Naive thymus-derived CD4-positive, alpha-beta T cell (primary cell): ENCODE measurements at regions of chr6 and their contacts with region 1.

Region 1: GRCh38 chr6:166382933-166383801 is at the start of gene MPC1:
- DNase-seq: peak; percentile 91 to 96 (median 94)
- ATAC-seq: peak; percentile 98
- H3K4me3 ChIP-seq: peak within 1 kb of the TSS; percentile 85
- H3K4me3 Mint-ChIP-seq: peak within 1 kb of the TSS; percentile 89 to 98 (median 94)
- H3K27ac ChIP-seq: peak within 1 kb of the TSS; percentile 87
- H3K27ac Mint-ChIP-seq: peak within 1 kb of the TSS; percentile 78 to 95 (median 91)
- H3K4me1 ChIP-seq: no peaks in the 10 kb centered on the region
- H3K4me1 Mint-ChIP-seq: peaks cover 4 to 20% (median 16%) of the 10 kb centered on the region in 7 donors
- H3K27me3 ChIP-seq: no peaks in the 10 kb centered on the region
- H3K27me3 Mint-ChIP-seq: peaks cover 0 to 8% (median 0%) of the 10 kb centered on the region in 5 donors
- total RNA-seq, gene MPC1: 18.5 to 31.1 (median 26.5) TPM

Region 2: GRCh38 chr6:166258854-166259276 is 124.3 kb before region 1 on chr6:
- CTCF ChIA-PET with region 1: interaction called, 3 read pairs
- POLR2A ChIA-PET with region 1: no interaction called
- intact Hi-C with region 1: loop called in 1 of 2 experiments (anchors 5 kb)
- DNase-seq: peak in 2 of 9 donors; percentile 20 to 21
- ATAC-seq: peak; percentile 84
- H3K4me3 ChIP-seq: no peak overlapping the region
- H3K4me3 Mint-ChIP-seq: peak overlapping the region in 9 of 10 donors; percentile 36 to 78 (median 75)
- H3K27ac ChIP-seq: no peak overlapping the region
- H3K27ac Mint-ChIP-seq: peak overlapping the region in 8 of 9 donors; percentile 75 to 99 (median 92)
- H3K4me1 ChIP-seq: peaks cover 8 to 22% of the 10 kb centered on the region in 2 donors
- H3K4me1 Mint-ChIP-seq: peaks cover 0 to 66% (median 42%) of the 10 kb centered on the region in 7 donors
- H3K27me3 ChIP-seq: no peaks in the 10 kb centered on the region
- H3K27me3 Mint-ChIP-seq: peaks cover 0 to 54% (median 34%) of the 10 kb centered on the region in 5 donors

Region 3: GRCh38 chr6:166313255-166314070 is 69.7 kb before region 1 on chr6:
- CTCF ChIA-PET with region 1: interaction called, 18 read pairs
- POLR2A ChIA-PET with region 1: no interaction called
- intact Hi-C with region 1: loop called (anchors 1 kb)
- DNase-seq: peak in 5 of 9 donors; percentile 28 to 55 (median 36)
- ATAC-seq: peak; percentile 98
- H3K4me3 ChIP-seq: no peak overlapping the region
- H3K4me3 Mint-ChIP-seq: no peak overlapping the region
- H3K27ac ChIP-seq: no peak overlapping the region
- H3K27ac Mint-ChIP-seq: no peak overlapping the region
- H3K4me1 ChIP-seq: no peaks in the 10 kb centered on the region
- H3K4me1 Mint-ChIP-seq: peaks cover 0 to 4% (median 0%) of the 10 kb centered on the region in 7 donors
- H3K27me3 ChIP-seq: peaks cover 0 to under 1% of the 10 kb centered on the region in 2 donors
- H3K27me3 Mint-ChIP-seq: peaks cover 13 to 42% (median 18%) of the 10 kb centered on the region in 5 donors

Region 4: GRCh38 chr6:166342349-166343149 is 40.6 kb before region 1 on chr6 and contains the start of gene SFT2D1:
- CTCF ChIA-PET with region 1: interaction called, 3 read pairs
- POLR2A ChIA-PET with region 1: interaction called, 9 read pairs
- intact Hi-C with region 1: loop called (anchors 1 kb)
- DNase-seq: peak; percentile 33 to 87 (median 47)
- ATAC-seq: peak; percentile 88
- H3K4me3 ChIP-seq: peak within 1 kb of the TSS; percentile 94
- H3K4me3 Mint-ChIP-seq: peak within 1 kb of the TSS in 8 of 10 donors; percentile 83 to 94 (median 90)
- H3K27ac ChIP-seq: peak within 1 kb of the TSS; percentile 79
- H3K27ac Mint-ChIP-seq: peak within 1 kb of the TSS; percentile 72 to 95 (median 84)
- H3K4me1 ChIP-seq: peaks cover 32 to 37% of the 10 kb centered on the region in 2 donors
- H3K4me1 Mint-ChIP-seq: peaks cover 4 to 18% (median 8%) of the 10 kb centered on the region in 7 donors
- H3K27me3 ChIP-seq: no peaks in the 10 kb centered on the region
- H3K27me3 Mint-ChIP-seq: peaks cover 0 to 10% (median 0%) of the 10 kb centered on the region in 5 donors
- total RNA-seq, gene SFT2D1: 18.3 to 50.1 (median 33.7) TPM

Region 5: GRCh38 chr6:166419286-166419685 is 36.1 kb after region 1 on chr6:
- CTCF ChIA-PET with region 1: no interaction called
- POLR2A ChIA-PET with region 1: interaction called, 5 read pairs
- intact Hi-C with region 1: loop called (anchors 1 kb)
- DNase-seq: peak in 2 of 9 donors; percentile 34 to 52
- ATAC-seq: peak; percentile 42
- H3K4me3 ChIP-seq: no peak overlapping the region
- H3K4me3 Mint-ChIP-seq: peak overlapping the region; percentile 4 to 79 (median 57)
- H3K27ac ChIP-seq: peak overlapping the region; percentile 50
- H3K27ac Mint-ChIP-seq: peak overlapping the region; percentile 83 to 99 (median 97)
- H3K4me1 ChIP-seq: peaks cover 63 to 66% of the 10 kb centered on the region in 2 donors
- H3K4me1 Mint-ChIP-seq: peaks cover 52 to 73% (median 64%) of the 10 kb centered on the region in 7 donors
- H3K27me3 ChIP-seq: no peaks in the 10 kb centered on the region
- H3K27me3 Mint-ChIP-seq: peaks cover 0 to 1% (median 0%) of the 10 kb centered on the region in 5 donors

Region 6: GRCh38 chr6:166627033-166627874 is 244.1 kb after region 1 on chr6 and contains the start of gene RPS6KA2:
- CTCF ChIA-PET with region 1: no interaction called
- POLR2A ChIA-PET with region 1: no interaction called
- intact Hi-C with region 1: loop called (anchors 1 kb)
- DNase-seq: peak; percentile 99 to 100 (median 100)
- ATAC-seq: peak; percentile 95
- H3K4me3 ChIP-seq: peak within 1 kb of the TSS; percentile 91
- H3K4me3 Mint-ChIP-seq: peak within 1 kb of the TSS; percentile 83 to 98 (median 91)
- H3K27ac ChIP-seq: peak within 1 kb of the TSS; percentile 66
- H3K27ac Mint-ChIP-seq: peak within 1 kb of the TSS; percentile 60 to 96 (median 90)
- H3K4me1 ChIP-seq: peaks cover 6 to 16% of the 10 kb centered on the region in 2 donors
- H3K4me1 Mint-ChIP-seq: peaks cover 8 to 30% (median 14%) of the 10 kb centered on the region in 7 donors
- H3K27me3 ChIP-seq: no peaks in the 10 kb centered on the region
- H3K27me3 Mint-ChIP-seq: peaks cover 0 to 60% (median 18%) of the 10 kb centered on the region in 5 donors
- total RNA-seq, gene RPS6KA2: 4.5 to 17.1 (median 6.6) TPM

Region 7: DNA sequence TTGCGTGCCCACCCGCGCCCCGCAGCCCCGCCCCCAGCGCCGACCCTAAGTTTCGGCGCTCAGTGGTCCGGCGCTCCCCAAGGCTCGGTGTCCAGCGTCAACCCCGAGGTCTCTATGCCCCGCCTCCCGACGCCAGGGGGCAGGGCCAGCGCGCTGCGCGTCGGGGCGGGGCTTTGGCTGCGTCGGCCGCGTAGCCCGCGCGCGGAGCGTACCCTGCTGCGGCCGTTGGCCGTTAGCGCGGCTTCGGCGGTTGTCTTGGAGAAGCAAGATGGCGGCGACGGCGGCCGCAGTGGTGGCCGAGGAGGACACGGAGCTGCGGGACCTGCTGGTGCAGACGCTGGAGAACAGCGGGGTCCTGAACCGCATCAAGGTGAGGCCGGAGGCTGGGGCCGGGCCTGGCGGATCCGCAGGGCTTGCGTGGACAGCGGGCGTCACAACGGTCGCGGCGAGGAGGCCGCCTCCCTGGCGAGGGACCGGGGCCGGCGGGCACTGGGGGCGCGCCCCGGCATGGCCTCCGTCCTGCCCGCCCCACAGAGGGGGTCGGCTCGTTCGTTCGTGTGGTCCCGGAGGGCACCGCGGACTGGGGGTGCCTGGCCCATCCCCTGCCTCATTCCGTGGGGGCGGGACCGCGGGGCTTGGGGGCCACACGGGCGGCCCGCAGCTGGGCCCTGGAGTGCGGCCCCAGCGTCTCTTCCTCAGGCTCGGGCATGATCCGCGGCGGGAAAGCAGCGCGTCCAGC is 616.1 kb after region 1 on chr6 and contains the start of gene CEP43:
- CTCF ChIA-PET with region 1: no interaction called
- POLR2A ChIA-PET with region 1: no interaction called
- intact Hi-C with region 1: loop called in 1 of 2 experiments (anchors 5 kb)
- DNase-seq: peak; percentile 64 to 93 (median 81)
- ATAC-seq: peak; percentile 94
- H3K4me3 ChIP-seq: peak within 1 kb of the TSS; percentile 83
- H3K4me3 Mint-ChIP-seq: peak within 1 kb of the TSS; percentile 85 to 95 (median 88)
- H3K27ac ChIP-seq: peak within 1 kb of the TSS; percentile 78
- H3K27ac Mint-ChIP-seq: peak within 1 kb of the TSS; percentile 61 to 95 (median 81)
- H3K4me1 ChIP-seq: peaks cover 16% of the 10 kb centered on the region in 2 donors
- H3K4me1 Mint-ChIP-seq: peaks cover 28 to 38% (median 30%) of the 10 kb centered on the region in 7 donors
- H3K27me3 ChIP-seq: no peaks in the 10 kb centered on the region
- H3K27me3 Mint-ChIP-seq: no peaks in the 10 kb centered on the region
- total RNA-seq, gene CEP43: 11.5 to 17.6 (median 15.5) TPM